Activated B cell treated with CpG ODN at 0.5 μM for 24 hours (primary cell): ENCODE measurements at regions of chr17 and their contacts with region 1.

Region 1: GRCh38 chr17:8173056-8173870 is 2.9 kb downstream of the TMEM107 start:
- DNase-seq: peak; percentile 40
- ATAC-seq: peak; percentile 76
- H3K4me3 Mint-ChIP-seq: peak overlapping the region; percentile 84
- H3K27ac Mint-ChIP-seq: peak overlapping the region; percentile 100
- H3K4me1 Mint-ChIP-seq: peaks cover 44% of the 10 kb centered on the region
- H3K27me3 Mint-ChIP-seq: no peaks in the 10 kb centered on the region
- CTCF ChIP-seq: no peak

Region 2: DNA sequence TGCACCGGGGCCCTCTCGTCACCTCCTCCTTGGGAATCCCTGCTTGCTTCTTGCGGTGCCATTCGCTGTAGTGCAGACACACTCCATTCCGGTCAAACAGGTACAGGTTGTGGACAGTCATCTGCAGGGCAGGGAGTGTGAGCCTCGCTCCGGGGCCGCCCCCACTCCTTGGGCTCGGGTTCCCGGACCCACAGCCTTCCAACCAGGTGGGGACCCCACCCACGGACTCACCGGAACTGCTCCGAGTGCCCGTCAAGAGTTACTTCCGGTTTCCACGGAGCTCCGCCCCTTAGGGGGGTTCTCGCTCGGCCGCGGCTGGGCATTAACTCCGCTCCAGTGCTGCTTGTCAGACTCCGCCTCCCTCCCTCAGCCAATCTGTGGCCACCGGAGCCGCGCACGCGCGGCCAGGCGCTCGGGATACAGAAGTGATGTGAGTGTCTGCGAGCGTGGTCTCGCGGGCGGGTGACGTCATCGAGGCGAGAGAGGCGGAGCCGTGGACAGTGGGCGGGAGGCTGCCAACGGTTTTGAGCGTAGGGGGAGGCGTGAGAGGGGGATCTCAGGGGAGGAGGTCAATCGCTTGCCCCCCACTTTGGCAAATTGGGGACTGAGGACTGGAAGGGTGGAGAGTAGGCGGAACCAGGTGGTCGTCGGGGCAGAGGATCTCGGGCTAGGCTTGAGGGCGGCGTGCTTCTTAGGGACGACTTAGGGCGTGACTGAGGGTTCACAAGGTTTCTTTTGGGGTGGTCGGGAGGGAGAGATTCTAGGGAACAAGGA is 241.4 kb before region 1 on chr17 and contains the starts of genes CNTROB and TRAPPC1:
- CTCF ChIA-PET with region 1: no interaction called
- POLR2A ChIA-PET with region 1: interaction called, 13 read pairs
- intact Hi-C with region 1: no loop called
- DNase-seq: peak; percentile 99
- ATAC-seq: peak; percentile 96
- H3K4me3 Mint-ChIP-seq: peak within 1 kb of the TSS; percentile 97
- H3K27ac Mint-ChIP-seq: peak within 1 kb of the TSS; percentile 92
- H3K4me1 Mint-ChIP-seq: peaks cover 48% of the 10 kb centered on the region
- H3K27me3 Mint-ChIP-seq: no peaks in the 10 kb centered on the region
- CTCF ChIP-seq: no peak
- total RNA-seq, gene CNTROB: 23.0 and 24.6 TPM in 2 replicates
- total RNA-seq, gene TRAPPC1: 129 and 167 TPM in 2 replicates

Region 3: DNA sequence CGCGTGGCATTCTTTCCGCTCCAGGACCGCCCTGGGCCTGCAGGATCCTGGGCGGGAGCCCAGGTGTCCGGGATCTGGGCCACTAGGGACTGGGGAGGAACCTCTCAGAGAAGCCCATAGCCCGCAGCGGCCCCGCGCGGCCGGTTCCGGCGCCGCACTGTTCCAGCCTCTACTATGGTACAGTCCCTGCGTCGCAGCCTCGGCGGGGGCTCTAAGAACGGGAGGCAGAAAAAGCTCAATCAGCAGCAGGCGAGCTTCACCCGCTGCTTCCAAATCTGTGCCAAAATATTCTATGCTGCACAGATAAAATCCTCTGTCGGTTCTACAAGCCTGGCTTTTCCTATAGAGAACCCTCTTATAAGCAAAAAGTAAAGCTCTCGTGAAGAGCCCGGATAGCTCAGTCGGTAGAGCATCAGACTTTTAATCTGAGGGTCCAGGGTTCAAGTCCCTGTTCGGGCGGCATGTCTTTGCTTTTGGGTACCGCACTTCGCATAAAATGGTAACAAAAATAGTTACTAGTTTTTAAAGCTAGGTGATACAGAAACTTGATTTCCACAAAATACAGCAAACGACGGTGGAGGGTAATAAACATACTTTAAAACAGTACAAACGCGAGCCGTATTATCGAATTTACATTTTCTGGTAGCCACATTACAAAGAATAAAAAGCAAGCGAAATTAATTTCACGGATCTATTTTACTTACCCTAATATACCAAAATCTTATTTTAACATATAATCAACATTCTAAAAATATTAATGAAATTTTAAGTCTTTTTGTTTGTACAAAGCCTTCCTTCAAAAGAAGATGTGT is 54.3 kb before region 1 on chr17:
- CTCF ChIA-PET with region 1: interaction called, 3 read pairs
- POLR2A ChIA-PET with region 1: interaction called, 57 read pairs
- intact Hi-C with region 1: loop called (anchors 1 kb)
- DNase-seq: peak; percentile 81
- ATAC-seq: peak; percentile 68
- H3K4me3 Mint-ChIP-seq: peak overlapping the region; percentile 93
- H3K27ac Mint-ChIP-seq: peak overlapping the region; percentile 96
- H3K4me1 Mint-ChIP-seq: peaks cover 58% of the 10 kb centered on the region
- H3K27me3 Mint-ChIP-seq: peaks cover 56% of the 10 kb centered on the region
- CTCF ChIP-seq: peak; percentile 26

Region 4: DNA sequence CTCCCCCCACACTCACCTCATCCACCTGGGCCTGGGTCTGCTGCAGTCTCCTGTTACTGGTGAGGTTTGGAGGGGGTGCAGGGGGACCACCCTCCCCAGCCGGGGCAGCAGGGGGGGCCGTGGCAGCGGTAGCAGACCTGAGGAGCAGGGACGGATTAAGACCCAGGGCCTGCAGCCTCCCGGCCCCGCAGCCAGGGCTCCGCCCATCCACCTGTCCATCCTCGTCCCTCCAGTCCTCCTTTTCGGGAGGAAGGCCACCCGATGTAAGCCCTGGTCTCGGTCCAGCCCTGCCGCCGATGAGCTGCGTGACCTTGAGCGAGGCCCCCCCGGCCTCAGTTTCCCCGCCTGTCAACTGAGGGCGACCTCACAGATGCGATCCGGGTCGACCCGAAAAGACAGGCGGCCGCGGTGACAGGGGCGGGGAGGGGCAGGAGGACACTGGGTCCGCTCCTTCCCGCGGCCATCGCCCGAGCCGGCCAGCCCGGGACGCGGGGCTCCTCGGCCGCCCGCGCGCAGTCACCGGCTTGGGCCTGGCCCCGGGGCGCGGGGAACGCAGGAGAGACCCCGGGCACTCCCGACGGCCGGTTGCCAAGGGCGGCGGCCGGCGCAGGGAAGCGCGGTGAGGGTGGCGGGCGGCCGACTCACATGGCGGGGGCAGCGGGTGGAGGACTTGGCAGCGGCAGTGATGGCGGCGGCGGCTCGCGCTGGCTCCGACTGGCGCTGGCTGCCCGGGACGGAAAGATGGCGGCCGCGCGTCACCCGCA is 10.8 kb before region 1 on chr17 and contains the start of gene VAMP2:
- CTCF ChIA-PET with region 1: interaction called, 5 read pairs
- POLR2A ChIA-PET with region 1: interaction called, 385 read pairs
- intact Hi-C with region 1: loop called (anchors 1 kb)
- DNase-seq: peak; percentile 91
- ATAC-seq: peak; percentile 71
- H3K4me3 Mint-ChIP-seq: peak within 1 kb of the TSS; percentile 91
- H3K27ac Mint-ChIP-seq: peak within 1 kb of the TSS; percentile 95
- H3K4me1 Mint-ChIP-seq: peaks cover 56% of the 10 kb centered on the region
- H3K27me3 Mint-ChIP-seq: no peaks in the 10 kb centered on the region
- CTCF ChIP-seq: no peak
- total RNA-seq, gene VAMP2: 82.0 and 97.7 TPM in 2 replicates

Region 5: GRCh38 chr17:8222630-8223356 is 49.5 kb after region 1 on chr17:
- CTCF ChIA-PET with region 1: no interaction called
- POLR2A ChIA-PET with region 1: interaction called, 113 read pairs
- intact Hi-C with region 1: loop called (anchors 1 kb)
- DNase-seq: peak; percentile 80
- ATAC-seq: peak; percentile 51
- H3K4me3 Mint-ChIP-seq: peak overlapping the region; percentile 97
- H3K27ac Mint-ChIP-seq: peak overlapping the region; percentile 97
- H3K4me1 Mint-ChIP-seq: peaks cover 68% of the 10 kb centered on the region
- H3K27me3 Mint-ChIP-seq: peaks cover 11% of the 10 kb centered on the region
- CTCF ChIP-seq: no peak

Region 6: GRCh38 chr17:8300627-8301242 is 127.5 kb after region 1 on chr17:
- CTCF ChIA-PET with region 1: interaction called, 3 read pairs
- POLR2A ChIA-PET with region 1: interaction called, 43 read pairs
- intact Hi-C with region 1: loop called (anchors 1 kb)
- DNase-seq: peak; percentile 30
- ATAC-seq: peak; percentile 97
- H3K4me3 Mint-ChIP-seq: no peak overlapping the region
- H3K27ac Mint-ChIP-seq: peak overlapping the region; percentile 46
- H3K4me1 Mint-ChIP-seq: peaks cover 8% of the 10 kb centered on the region
- H3K27me3 Mint-ChIP-seq: no peaks in the 10 kb centered on the region
- CTCF ChIP-seq: no peak